ENCODE measurements at regions of chr14 and their contacts with region 1.

Region 1: DNA sequence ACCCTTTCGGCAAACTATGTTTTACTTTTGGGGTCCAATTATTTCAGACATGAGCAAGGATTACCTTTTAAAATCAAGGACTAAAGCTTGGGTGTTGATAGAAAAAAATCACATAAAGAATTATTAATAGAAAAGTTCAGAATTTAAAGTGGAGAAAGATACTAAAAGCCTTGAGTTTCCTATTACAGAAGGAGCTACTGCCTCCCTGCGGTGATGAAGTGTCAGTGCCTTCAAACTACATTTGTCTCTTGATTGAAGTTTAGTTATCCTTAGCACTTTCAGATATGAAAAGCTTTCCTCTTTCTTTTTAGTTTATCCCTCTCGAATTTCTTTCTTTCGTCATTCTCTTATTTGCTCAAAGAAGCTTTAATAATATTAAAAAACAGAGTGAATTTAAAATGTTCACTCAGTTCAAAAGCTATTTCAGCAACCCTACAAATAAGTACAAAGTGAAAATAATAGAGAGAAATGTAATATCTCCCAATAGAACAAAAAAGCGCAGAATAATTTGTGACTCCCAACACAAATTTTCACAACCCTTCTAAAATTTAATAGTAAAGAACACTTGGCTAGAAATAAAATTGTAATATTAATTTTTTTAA is 87.6 kb downstream of the SEC23A start:
- DNase-seq: no peak
- ATAC-seq: peak in 1 of 2 donors; percentile 62
- H3K4me3 ChIP-seq: no peak overlapping the region
- H3K27ac ChIP-seq: no peak overlapping the region
- H3K4me1 ChIP-seq: no peaks in the 10 kb centered on the region
- H3K27me3 ChIP-seq: no peaks in the 10 kb centered on the region
- CTCF ChIP-seq: peak; percentile 80

Region 2: GRCh38 chr14:38737686-38738407 is 277.6 kb before region 1 on chr14:
- intact Hi-C with region 1: loop called (anchors 10 kb)
- DNase-seq: no peak
- ATAC-seq: no peak
- H3K4me3 ChIP-seq: no peak overlapping the region
- H3K27ac ChIP-seq: no peak overlapping the region
- H3K4me1 ChIP-seq: no peaks in the 10 kb centered on the region
- H3K27me3 ChIP-seq: no peaks in the 10 kb centered on the region
- CTCF ChIP-seq: no peak

Region 3: DNA sequence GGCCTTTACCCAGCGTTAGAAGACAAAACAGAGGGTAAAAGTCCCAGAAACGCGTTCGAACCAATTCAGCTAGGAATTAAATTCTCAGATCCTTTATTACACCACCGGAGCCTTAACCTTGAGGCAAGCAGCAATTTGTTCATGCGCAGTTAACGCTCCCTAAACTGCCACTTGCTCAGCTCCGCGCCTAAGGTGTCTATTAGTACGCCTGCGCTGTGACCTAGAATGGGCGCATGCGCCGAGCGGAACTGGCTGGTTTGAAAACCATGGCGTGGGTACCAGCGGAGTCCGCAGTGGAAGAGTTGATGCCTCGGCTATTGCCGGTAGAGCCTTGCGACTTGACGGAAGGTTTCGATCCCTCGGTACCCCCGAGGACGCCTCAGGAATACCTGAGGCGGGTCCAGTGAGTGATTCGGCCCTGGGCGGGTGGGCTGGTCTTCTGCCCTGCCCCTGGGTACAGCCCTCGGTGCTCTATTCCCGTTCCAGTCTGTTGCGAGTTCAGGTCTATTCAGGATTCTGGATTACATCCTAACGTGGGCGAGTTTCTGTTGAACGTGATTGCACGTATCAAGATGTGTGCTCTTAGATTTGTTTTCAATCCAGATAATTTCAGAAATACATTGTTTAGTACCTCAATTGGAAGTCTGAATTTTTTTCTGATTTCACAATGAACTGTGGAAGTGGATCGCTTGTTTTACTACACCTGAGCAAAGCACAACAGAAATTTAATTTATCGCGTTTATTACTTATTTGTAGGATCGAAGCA is 98.8 kb after region 1 on chr14 and contains the start of gene GEMIN2:
- intact Hi-C with region 1: no loop called
- DNase-seq: peak; percentile 95
- ATAC-seq: peak; percentile 100
- H3K4me3 ChIP-seq: peak within 1 kb of the TSS; percentile 80
- H3K27ac ChIP-seq: peak within 1 kb of the TSS; percentile 77
- H3K4me1 ChIP-seq: peaks cover 14% of the 10 kb centered on the region
- H3K27me3 ChIP-seq: no peaks in the 10 kb centered on the region
- CTCF ChIP-seq: no peak
- total RNA-seq, gene GEMIN2: 8.4 TPM